GM12878 (cell line): ENCODE measurements at regions of chr1 and their contacts with region 1.

Region 1: GRCh38 chr1:52697795-52698674 is at the start of gene COA7:
- DNase-seq: peak; percentile 23
- ATAC-seq: peak; percentile 70
- H3K4me3 ChIP-seq: peak within 1 kb of the TSS; percentile 75
- H3K27ac ChIP-seq: peak within 1 kb of the TSS; percentile 80
- H3K4me1 ChIP-seq: no peaks in the 10 kb centered on the region; the same call in 1 of the 2 replicates
- H3K27me3 ChIP-seq: no peaks in the 10 kb centered on the region
- CTCF ChIP-seq: no peak
- EP300 ChIP-seq: no peak
- POLR2A ChIP-seq: peak; percentile 74
- RAD21 ChIP-seq: no peak
- polyA plus RNA-seq, gene COA7: 12.4 to 13.4 TPM

Region 2: GRCh38 chr1:52825868-52826267 is 127.8 kb after region 1 on chr1:
- CTCF ChIA-PET with region 1: interaction called, 11 read pairs
- POLR2A ChIA-PET with region 1: no interaction called
- RAD21 ChIA-PET with region 1: interaction called, 5 read pairs
- SMC1A ChIA-PET with region 1: interaction called, 4 read pairs
- in situ Hi-C with region 1: no loop called
- intact Hi-C with region 1: loop called (anchors 5 kb)
- DNase-seq: no peak
- ATAC-seq: peak; percentile 70
- H3K4me3 ChIP-seq: no peak overlapping the region
- H3K27ac ChIP-seq: no peak overlapping the region
- H3K4me1 ChIP-seq: no peaks in the 10 kb centered on the region
- H3K27me3 ChIP-seq: no peaks in the 10 kb centered on the region
- CTCF ChIP-seq: peak; percentile 18 to 42 (median 30); a peak in 4 of 6 replicates
- EP300 ChIP-seq: no peak
- POLR2A ChIP-seq: no peak
- RAD21 ChIP-seq: peak; percentile 35

Region 3: GRCh38 chr1:53294567-53294966 is 596.5 kb after region 1 on chr1:
- CTCF ChIA-PET with region 1: no interaction called
- POLR2A ChIA-PET with region 1: no interaction called
- RAD21 ChIA-PET with region 1: no interaction called
- SMC1A ChIA-PET with region 1: no interaction called
- in situ Hi-C with region 1: no loop called
- intact Hi-C with region 1: no loop called
- DNase-seq: no peak
- ATAC-seq: no peak
- H3K4me3 ChIP-seq: no peak overlapping the region
- H3K27ac ChIP-seq: peak overlapping the region; percentile 77
- H3K4me1 ChIP-seq: peaks cover 51% of the 10 kb centered on the region
- H3K27me3 ChIP-seq: no peaks in the 10 kb centered on the region
- CTCF ChIP-seq: no peak
- EP300 ChIP-seq: no peak
- POLR2A ChIP-seq: no peak
- RAD21 ChIP-seq: no peak